Spleen (tissue), 13 donors: ENCODE measurements at regions of chr5 and their contacts with region 1.

Region 1: GRCh38 chr5:5481206-5481605 is 58.7 kb downstream of the ICE1 start:
- DNase-seq: no peak
- H3K4me3 ChIP-seq: no peak overlapping the region
- H3K27ac ChIP-seq: peak overlapping the region in 5 of 8 donors; percentile 29 to 56 (median 46)
- H3K4me1 ChIP-seq: peaks cover 0 to 11% (median 6%) of the 10 kb centered on the region in 6 donors
- H3K27me3 ChIP-seq: no peaks in the 10 kb centered on the region
- CTCF ChIP-seq: no peak
- POLR2A ChIP-seq: no peak

Region 2: DNA sequence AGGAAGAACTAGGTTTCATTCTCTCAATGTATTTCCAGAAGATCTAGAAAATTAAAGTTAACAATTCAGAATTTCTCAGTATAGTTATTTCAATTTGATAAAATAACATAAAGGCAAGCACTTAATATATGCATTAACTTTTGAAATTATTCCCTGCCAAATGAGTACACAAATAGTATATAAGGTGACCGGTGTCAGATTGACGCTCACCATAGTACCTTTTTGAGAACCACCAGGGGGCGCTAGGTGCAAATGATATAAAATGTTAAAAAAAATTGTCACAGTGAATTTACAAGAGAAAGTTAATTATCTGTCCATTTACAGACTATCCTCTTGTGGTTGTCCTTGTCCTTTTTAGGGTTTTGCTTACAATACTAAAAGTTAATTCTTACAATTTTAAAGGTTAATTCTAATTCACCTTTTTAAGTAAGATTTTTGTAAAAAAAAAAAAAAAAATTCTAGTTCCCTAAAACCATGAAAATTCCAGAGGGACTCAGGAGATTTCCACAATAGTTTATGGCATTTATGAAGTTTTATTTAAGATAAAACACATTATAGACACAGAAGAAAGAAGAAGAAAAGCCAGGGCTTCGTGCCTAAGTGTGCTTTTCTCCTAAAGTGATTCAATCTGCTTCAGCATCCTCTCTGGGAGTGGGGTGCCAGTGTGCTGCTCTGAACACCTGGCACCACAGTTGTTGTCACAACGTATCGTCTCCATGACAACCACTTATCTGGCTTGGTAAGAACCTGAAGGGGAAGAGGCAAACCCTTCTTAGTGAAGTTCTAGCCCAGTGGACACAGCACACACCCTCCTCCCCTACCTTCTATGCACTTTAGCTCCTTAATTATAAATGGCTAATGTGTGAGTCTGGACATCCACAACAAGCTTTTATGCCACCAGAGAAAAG is 339.3 kb before region 1 on chr5:
- intact Hi-C with region 1: no loop called
- DNase-seq: no peak
- H3K4me3 ChIP-seq: no peak overlapping the region
- H3K27ac ChIP-seq: no peak overlapping the region
- H3K4me1 ChIP-seq: peaks cover 5 to 25% (median 18%) of the 10 kb centered on the region in 6 donors
- H3K27me3 ChIP-seq: peaks cover 8 to 52% (median 25%) of the 10 kb centered on the region in 7 donors
- CTCF ChIP-seq: peak in 10 of 11 experiments; percentile 49 to 83 (median 65)
- POLR2A ChIP-seq: no peak

Region 3: DNA sequence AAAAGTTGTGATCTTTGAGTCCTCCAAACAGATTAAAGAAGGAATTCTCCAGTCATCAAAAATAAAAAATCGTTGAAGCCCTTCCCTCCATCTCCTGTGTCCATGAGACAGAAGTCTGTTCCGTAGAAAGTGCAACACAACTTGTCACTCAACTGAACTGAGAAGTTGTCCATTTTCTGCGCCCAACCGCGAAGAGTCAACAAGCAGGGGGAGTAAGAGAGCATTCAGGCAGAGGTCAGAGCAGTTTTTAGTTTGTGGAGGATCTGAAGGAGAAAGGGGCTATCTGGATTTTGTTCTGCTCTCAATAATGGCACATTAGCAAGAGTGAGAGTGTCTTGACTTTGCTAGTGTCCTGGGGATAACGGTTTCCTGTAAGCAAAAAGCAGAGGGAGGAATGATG is 245.2 kb after region 1 on chr5:
- intact Hi-C with region 1: no loop called
- DNase-seq: no peak
- H3K4me3 ChIP-seq: no peak overlapping the region
- H3K27ac ChIP-seq: no peak overlapping the region
- H3K4me1 ChIP-seq: no peaks in the 10 kb centered on the region
- H3K27me3 ChIP-seq: no peaks in the 10 kb centered on the region
- CTCF ChIP-seq: no peak
- POLR2A ChIP-seq: no peak

Region 4: DNA sequence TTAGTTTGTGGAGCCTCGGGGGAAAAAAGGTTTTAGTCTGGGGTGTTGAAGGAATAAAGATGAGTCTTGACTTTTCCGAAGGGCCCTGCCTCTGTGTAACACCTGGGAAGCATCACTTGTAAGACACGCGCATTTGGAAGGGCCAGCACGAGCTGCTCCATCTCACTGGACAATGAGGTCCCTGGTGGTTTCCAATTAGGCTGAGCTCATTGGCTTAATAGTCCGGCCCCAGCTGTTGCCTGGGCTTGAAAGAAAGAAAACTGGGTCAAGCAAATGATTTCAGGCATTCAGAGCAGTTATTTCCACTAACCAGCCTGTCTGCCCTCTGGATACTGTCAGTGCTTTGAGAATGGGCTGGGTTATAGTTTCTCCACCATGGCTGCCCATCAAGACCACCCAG is 1087.2 kb after region 1 on chr5:
- intact Hi-C with region 1: loop called (anchors 10 kb)
- DNase-seq: no peak
- H3K4me3 ChIP-seq: no peak overlapping the region
- H3K27ac ChIP-seq: no peak overlapping the region
- H3K4me1 ChIP-seq: no peaks in the 10 kb centered on the region
- H3K27me3 ChIP-seq: peaks cover 0 to 44% (median 0%) of the 10 kb centered on the region in 7 donors
- CTCF ChIP-seq: no peak
- POLR2A ChIP-seq: no peak